ENCODE measurements at regions of chr5 and their contacts with region 1.

Region 1: GRCh38 chr5:111668477-111669414 is 88.2 kb downstream of the NREP start:
- DNase-seq: no peak
- H3K4me3 Mint-ChIP-seq: no peak overlapping the region
- H3K27ac Mint-ChIP-seq: no peak overlapping the region
- H3K4me1 Mint-ChIP-seq: no peaks in the 10 kb centered on the region
- H3K27me3 Mint-ChIP-seq: peaks cover 3% of the 10 kb centered on the region

Region 2: DNA sequence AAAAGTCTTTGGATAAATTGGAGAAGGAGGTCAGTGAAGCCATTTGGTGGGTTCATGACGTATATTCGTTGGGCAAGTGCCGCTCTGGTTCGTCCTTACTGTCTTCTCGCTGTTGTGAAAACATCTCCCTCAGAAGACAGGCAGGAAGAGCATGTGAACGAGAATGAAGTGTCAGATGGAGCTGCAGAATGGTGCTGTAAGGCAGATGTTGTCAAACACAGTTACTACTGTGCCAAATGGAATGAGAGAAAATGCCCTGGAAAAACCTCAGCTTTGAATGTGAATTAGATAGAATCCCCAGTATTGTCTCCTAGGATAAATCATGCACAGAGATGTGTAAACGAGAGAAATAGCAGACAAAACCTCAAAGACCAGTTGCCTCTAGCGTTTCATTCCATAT is 323.0 kb before region 1 on chr5:
- CTCF ChIA-PET with region 1: no interaction called
- POLR2A ChIA-PET with region 1: no interaction called
- intact Hi-C with region 1: no loop called
- DNase-seq: no peak
- H3K4me3 Mint-ChIP-seq: no peak overlapping the region
- H3K27ac Mint-ChIP-seq: no peak overlapping the region
- H3K4me1 Mint-ChIP-seq: peaks cover 34% of the 10 kb centered on the region
- H3K27me3 Mint-ChIP-seq: no peaks in the 10 kb centered on the region

Region 3: GRCh38 chr5:111628901-111629300 is 39.8 kb before region 1 on chr5:
- CTCF ChIA-PET with region 1: no interaction called
- POLR2A ChIA-PET with region 1: no interaction called
- intact Hi-C with region 1: loop called (anchors 1 kb)
- DNase-seq: no peak
- H3K4me3 Mint-ChIP-seq: no peak overlapping the region
- H3K27ac Mint-ChIP-seq: no peak overlapping the region
- H3K4me1 Mint-ChIP-seq: peaks cover 4% of the 10 kb centered on the region
- H3K27me3 Mint-ChIP-seq: peaks cover 9% of the 10 kb centered on the region